ENCODE measurements at regions of chr2 and their contacts with region 1.

Region 1: GRCh38 chr2:6887751-6888192 is 10.2 kb downstream of the RSAD2 start:
- DNase-seq: peak; percentile 53 to 93 (median 82)
- H3K4me3 ChIP-seq: no peak overlapping the region
- H3K27ac ChIP-seq: peak overlapping the region in 1 of 2 experiments; percentile 62
- H3K4me1 ChIP-seq: peaks cover 10 to 38% (median 30%) of the 10 kb centered on the region in 4 experiments
- H3K27me3 ChIP-seq: no peaks in the 10 kb centered on the region

Region 2: DNA sequence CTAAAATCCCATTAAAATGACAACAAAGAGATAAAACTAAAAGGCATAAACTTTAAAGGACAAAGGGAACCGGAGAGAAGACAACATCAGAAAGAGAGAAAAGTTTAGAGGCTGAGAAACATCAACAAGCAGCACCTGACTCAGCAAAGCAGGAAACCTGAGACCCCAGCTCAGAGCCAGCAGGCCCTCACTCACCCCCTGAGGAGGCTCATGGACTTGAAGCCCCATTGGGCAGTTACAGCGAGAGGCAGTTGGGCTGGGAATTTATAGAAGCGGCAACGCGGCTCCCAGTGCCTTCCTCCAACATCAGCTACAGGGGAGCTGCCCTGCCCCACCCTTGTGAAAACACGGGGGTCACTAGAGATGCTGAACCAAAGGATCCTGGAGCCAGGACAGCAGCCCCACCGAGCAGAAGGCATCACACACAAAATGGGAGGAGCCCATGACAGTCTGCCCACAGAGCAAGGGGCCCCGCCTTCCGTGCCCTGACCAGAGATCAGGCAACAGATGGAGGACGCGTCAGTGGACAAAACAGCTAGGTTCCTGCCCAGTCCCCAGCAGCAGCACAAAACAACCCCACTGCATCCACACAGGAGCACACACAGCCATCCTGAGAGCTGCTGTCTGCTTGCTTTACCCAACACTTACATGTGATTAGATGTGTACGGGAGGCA is 74.8 kb before region 1 on chr2:
- CTCF ChIA-PET with region 1: no interaction called
- POLR2A ChIA-PET with region 1: no interaction called
- DNase-seq: no peak
- H3K4me3 ChIP-seq: no peak overlapping the region
- H3K27ac ChIP-seq: no peak overlapping the region
- H3K4me1 ChIP-seq: no peaks in the 10 kb centered on the region
- H3K27me3 ChIP-seq: peaks cover 0 to 4% (median 0%) of the 10 kb centered on the region in 5 experiments

Region 3: DNA sequence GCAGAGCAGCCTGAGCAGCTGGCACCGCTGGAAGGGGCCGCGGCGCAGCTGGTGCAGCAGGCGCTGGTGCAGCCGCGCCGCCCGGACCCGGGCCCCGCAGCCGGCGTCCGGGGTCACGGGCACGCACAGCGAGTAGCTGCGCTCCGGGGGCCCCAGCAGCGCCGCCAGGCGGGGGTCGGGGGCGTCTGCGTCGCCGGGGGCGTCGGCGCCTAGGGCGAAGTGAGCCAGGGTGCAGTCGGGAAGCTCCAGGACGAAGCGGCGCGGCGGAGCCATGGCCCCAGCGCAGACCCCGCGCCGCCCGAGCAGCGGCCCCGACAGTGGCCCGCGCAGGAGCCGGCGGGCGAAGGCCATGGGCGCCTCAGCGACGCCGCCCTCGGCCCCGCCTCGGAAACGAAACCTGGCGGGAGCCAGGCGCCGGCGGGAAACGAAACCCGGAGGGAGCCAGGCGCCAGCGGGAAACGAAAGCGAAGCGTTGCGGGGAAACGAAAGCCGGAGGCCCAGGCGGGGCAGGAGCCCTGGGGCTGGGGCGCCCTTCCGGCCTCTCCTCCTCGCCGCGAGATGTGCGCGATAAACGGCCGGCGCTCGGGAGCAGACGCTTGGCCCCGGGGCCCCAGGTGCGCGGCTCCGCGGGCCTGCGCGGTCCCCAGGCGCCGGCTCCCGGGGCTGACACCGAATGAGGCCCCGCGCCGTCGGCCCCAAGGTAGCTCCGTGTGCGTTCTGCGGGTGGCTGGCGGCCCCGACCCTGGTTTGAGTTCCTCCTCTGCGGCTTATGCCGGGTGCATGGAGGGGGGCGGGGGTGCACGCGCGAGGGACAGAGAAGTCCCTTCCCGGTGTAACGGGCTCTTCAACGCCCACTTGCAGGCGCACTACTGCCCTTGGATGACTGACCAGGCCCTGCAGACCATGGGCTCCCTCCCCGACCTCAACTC is 22.2 kb before region 1 on chr2 and contains the start of gene CMPK2:
- CTCF ChIA-PET with region 1: interaction called, 10 read pairs
- POLR2A ChIA-PET with region 1: interaction called, 5 read pairs
- DNase-seq: peak; percentile 78 to 92 (median 92)
- H3K4me3 ChIP-seq: peak within 1 kb of the TSS; percentile 75 to 96 (median 86)
- H3K27ac ChIP-seq: peak within 1 kb of the TSS; percentile 56 to 78
- H3K4me1 ChIP-seq: peaks cover 15 to 35% (median 23%) of the 10 kb centered on the region in 4 experiments
- H3K27me3 ChIP-seq: no peaks in the 10 kb centered on the region

Region 4: GRCh38 chr2:6877402-6878304 is 10.1 kb before region 1 on chr2 and contains the start of gene RSAD2:
- CTCF ChIA-PET with region 1: interaction called, 20 read pairs
- POLR2A ChIA-PET with region 1: no interaction called
- DNase-seq: peak; percentile 68 to 86 (median 81)
- H3K4me3 ChIP-seq: peak within 1 kb of the TSS in 6 of 7 experiments; percentile 58 to 89 (median 74)
- H3K27ac ChIP-seq: peak within 1 kb of the TSS; percentile 16 to 67
- H3K4me1 ChIP-seq: peaks cover 27 to 74% (median 58%) of the 10 kb centered on the region in 4 experiments
- H3K27me3 ChIP-seq: no peaks in the 10 kb centered on the region